HEK293 (cell line): ENCODE measurements at regions of chr17 and their contacts with region 1.

Region 1: GRCh38 chr17:50783193-50783660 is 15.9 kb upstream of the ANKRD40CL start:
- H3K4me3 ChIP-seq: no peak overlapping the region
- H3K27ac ChIP-seq: no peak overlapping the region
- H3K4me1 ChIP-seq: no peaks in the 10 kb centered on the region
- CTCF ChIP-seq: peak; percentile 98

Region 2: DNA sequence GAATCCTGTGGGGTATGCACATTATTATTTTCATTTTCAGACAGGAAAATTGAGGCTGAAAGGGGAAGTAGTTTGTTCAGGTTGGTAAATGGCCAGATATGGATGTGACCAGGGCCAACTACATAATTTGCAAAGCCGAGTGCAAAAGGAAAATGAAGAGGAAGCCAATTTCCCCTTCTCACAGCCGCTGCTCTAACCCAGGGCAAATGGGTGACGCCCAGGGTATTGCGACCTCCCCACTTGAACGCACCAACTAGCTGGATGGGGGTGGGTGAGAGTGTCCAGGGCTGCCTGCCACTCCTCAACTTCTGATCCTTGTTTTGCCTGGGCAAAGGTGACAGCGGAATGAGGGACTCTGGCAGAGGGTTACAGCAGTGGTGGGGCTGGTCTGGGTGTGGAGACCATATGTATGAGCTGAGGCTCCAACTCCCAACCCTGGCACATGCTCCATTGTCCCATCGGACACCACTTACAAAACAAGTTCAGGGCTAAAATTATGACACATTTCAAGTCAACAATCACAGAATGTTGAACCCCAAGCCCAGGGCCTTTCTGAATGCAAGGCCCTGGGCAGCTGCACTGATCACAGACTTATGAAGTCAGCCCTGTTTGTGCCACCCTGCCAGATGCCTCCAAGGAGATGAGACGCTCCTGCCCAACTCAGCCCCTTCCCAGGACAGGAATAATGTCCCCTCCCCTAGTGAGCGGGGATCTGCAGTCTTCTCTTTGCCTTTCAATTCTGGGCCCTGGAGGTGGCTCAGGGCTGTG is 17.6 kb before region 1 on chr17:
- CTCF ChIA-PET with region 1: interaction called, 27 read pairs
- POLR2A ChIA-PET with region 1: interaction called, 3 read pairs
- H3K4me3 ChIP-seq: no peak overlapping the region
- H3K27ac ChIP-seq: no peak overlapping the region
- H3K4me1 ChIP-seq: peaks cover 8% of the 10 kb centered on the region
- CTCF ChIP-seq: no peak

Region 3: GRCh38 chr17:50798424-50799288 is 15.4 kb after region 1 on chr17:
- CTCF ChIA-PET with region 1: interaction called, 41 read pairs
- POLR2A ChIA-PET with region 1: interaction called, 7 read pairs
- H3K4me3 ChIP-seq: no peak overlapping the region
- H3K27ac ChIP-seq: peak overlapping the region; percentile 11; the same call in 1 of the 2 replicates
- H3K4me1 ChIP-seq: no peaks in the 10 kb centered on the region
- CTCF ChIP-seq: no peak

Region 4: GRCh38 chr17:50816771-50817751 is 33.8 kb after region 1 on chr17:
- CTCF ChIA-PET with region 1: interaction called, 35 read pairs
- POLR2A ChIA-PET with region 1: no interaction called
- H3K4me3 ChIP-seq: no peak overlapping the region
- H3K27ac ChIP-seq: no peak overlapping the region
- H3K4me1 ChIP-seq: no peaks in the 10 kb centered on the region
- CTCF ChIP-seq: peak; percentile 49; the same call in 1 of the 2 replicates

Region 5: GRCh38 chr17:50841949-50842354 is 58.7 kb after region 1 on chr17:
- CTCF ChIA-PET with region 1: interaction called, 240 read pairs
- POLR2A ChIA-PET with region 1: no interaction called
- H3K4me3 ChIP-seq: no peak overlapping the region
- H3K27ac ChIP-seq: no peak overlapping the region
- H3K4me1 ChIP-seq: no peaks in the 10 kb centered on the region
- CTCF ChIP-seq: peak; percentile 82

Region 6: GRCh38 chr17:50949989-50950881 is 167.0 kb after region 1 on chr17:
- CTCF ChIA-PET with region 1: interaction called, 29 read pairs
- POLR2A ChIA-PET with region 1: interaction called, 3 read pairs
- H3K4me3 ChIP-seq: no peak overlapping the region
- H3K27ac ChIP-seq: peak overlapping the region; percentile 44; the same call in 1 of the 2 replicates
- H3K4me1 ChIP-seq: no peaks in the 10 kb centered on the region; the same call in 1 of the 2 replicates
- CTCF ChIP-seq: peak; percentile 94

Region 7: GRCh38 chr17:50967795-50968194 is 184.6 kb after region 1 on chr17:
- CTCF ChIA-PET with region 1: interaction called, 12 read pairs
- POLR2A ChIA-PET with region 1: no interaction called
- H3K4me3 ChIP-seq: no peak overlapping the region
- H3K27ac ChIP-seq: no peak overlapping the region
- H3K4me1 ChIP-seq: no peaks in the 10 kb centered on the region
- CTCF ChIP-seq: no peak